Activated T-helper 2 cell treated with anti-CD3 and anti-CD28 coated beads, Interferon-gamma antibody, Interleukin-2, Interleukin-4, amounts not matched to agents 10 μg/mL and 5 μg/mL and 100 μg/mL, durations not matched to agents 14 hours and 24 hours and 36 hours (primary cell): ENCODE measurements at regions of chr16 and their contacts with region 1.

Region 1: DNA sequence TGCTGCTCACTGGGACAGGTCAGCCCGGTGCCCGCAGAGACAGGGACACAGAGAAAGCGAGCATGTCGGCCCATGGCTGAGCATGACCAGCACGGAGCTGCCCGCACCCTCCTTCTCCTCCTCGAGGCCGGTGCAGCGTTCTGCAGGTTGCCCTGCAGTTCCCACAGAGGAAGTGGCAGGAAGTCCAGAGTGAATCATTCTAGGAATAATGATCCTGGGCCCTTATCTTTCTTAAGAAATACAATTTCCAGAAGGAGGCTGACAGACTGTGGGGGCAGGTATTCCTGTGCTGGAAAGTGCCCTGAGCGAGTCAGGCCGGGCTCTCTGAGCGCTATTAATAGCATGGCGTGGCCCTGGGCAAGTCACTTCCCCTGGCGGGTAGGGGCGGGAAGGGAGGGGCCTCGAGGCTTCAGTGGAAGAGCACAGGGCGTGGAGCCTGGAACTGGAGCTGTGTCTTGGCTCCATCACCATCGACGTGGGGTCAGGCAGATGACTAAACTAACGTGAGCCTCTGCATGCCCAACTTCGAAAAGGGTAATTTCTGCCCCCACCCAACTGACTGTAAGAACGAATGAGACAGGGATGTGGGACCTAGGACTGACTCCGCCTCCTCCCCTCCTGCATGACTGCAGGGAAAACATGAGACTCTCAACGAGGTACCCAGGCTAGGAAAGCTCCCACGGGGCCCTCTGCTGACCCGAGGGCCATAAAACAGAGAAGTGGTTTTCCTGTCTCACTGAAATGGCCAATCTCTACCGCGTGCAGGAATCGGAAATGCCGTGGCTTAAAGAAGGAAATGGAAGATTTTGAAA is 9.8 kb downstream of the TMEM204 start:
- DNase-seq: peak; percentile 40
- H3K4me3 Mint-ChIP-seq: peak overlapping the region; percentile 66
- H3K27ac Mint-ChIP-seq: peak overlapping the region; percentile 94
- H3K4me1 Mint-ChIP-seq: peaks cover 24% of the 10 kb centered on the region
- H3K27me3 Mint-ChIP-seq: no peaks in the 10 kb centered on the region

Region 2: GRCh38 chr16:1492923-1493745 is 50.2 kb before region 1 on chr16 and contains the start of gene TELO2:
- intact Hi-C with region 1: loop called (anchors 5 kb)
- DNase-seq: peak; percentile 84
- H3K4me3 Mint-ChIP-seq: peak within 1 kb of the TSS; percentile 90
- H3K27ac Mint-ChIP-seq: peak within 1 kb of the TSS; percentile 98
- H3K4me1 Mint-ChIP-seq: peaks cover 10% of the 10 kb centered on the region
- H3K27me3 Mint-ChIP-seq: no peaks in the 10 kb centered on the region
- total RNA-seq, gene TELO2: 72.6 and 74.8 TPM in 2 replicates